Activated CD8-positive, alpha-beta memory T cell treated with anti-CD3 and anti-CD28 coated beads, Interleukin-2, amount 10 ng/mL, durations not matched to agents 7 days and 5 days (primary cell): ENCODE measurements at regions of chr14 and their contacts with region 1.

Region 1: GRCh38 chr14:24710403-24711112 is 76.6 kb upstream of the GZMB start:
- DNase-seq: peak; percentile 77
- ATAC-seq: peak; percentile 77
- H3K4me3 Mint-ChIP-seq: no peak overlapping the region
- H3K27ac Mint-ChIP-seq: no peak overlapping the region
- H3K4me1 Mint-ChIP-seq: peaks cover 4% of the 10 kb centered on the region
- H3K27me3 Mint-ChIP-seq: no peaks in the 10 kb centered on the region

Region 2: GRCh38 chr14:24695265-24696241 is 15.0 kb before region 1 on chr14:
- CTCF ChIA-PET with region 1: interaction called, 33 read pairs
- DNase-seq: peak; percentile 61
- ATAC-seq: peak; percentile 21
- H3K4me3 Mint-ChIP-seq: no peak overlapping the region
- H3K27ac Mint-ChIP-seq: no peak overlapping the region
- H3K4me1 Mint-ChIP-seq: peaks cover 28% of the 10 kb centered on the region
- H3K27me3 Mint-ChIP-seq: no peaks in the 10 kb centered on the region

Region 3: DNA sequence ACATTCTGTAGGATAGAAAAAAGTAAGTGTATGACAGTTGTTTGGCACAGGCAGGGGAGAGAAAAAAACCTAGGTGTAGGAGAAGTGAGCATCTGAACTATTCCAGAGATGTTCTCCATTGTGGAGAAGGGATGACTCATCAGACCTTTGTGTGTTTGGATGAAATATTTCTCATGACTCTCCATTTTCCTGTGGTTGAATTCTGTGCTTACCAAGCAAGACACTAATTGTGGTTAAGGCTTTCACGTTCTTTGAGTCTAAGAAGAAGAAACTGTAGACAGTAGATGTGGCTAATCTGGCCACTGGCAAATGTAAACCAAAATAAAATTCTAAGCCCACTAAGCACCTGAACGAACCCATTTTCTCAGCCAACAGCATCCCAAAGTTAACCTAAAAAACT is 31.3 kb after region 1 on chr14:
- CTCF ChIA-PET with region 1: interaction called, 10 read pairs
- DNase-seq: no peak
- ATAC-seq: no peak
- H3K4me3 Mint-ChIP-seq: no peak overlapping the region
- H3K27ac Mint-ChIP-seq: no peak overlapping the region
- H3K4me1 Mint-ChIP-seq: no peaks in the 10 kb centered on the region
- H3K27me3 Mint-ChIP-seq: peaks cover 11% of the 10 kb centered on the region

Region 4: GRCh38 chr14:25132732-25133422 is 422.3 kb after region 1 on chr14:
- CTCF ChIA-PET with region 1: interaction called, 46 read pairs
- DNase-seq: peak; percentile 56
- ATAC-seq: peak; percentile 86
- H3K4me3 Mint-ChIP-seq: no peak overlapping the region
- H3K27ac Mint-ChIP-seq: no peak overlapping the region
- H3K4me1 Mint-ChIP-seq: no peaks in the 10 kb centered on the region
- H3K27me3 Mint-ChIP-seq: peaks cover 34% of the 10 kb centered on the region